Psoas muscle (tissue), 8 donors: ENCODE measurements at regions of chr16 and their contacts with region 1.

Region 1: GRCh38 chr16:69339289-69340108 is at the starts of genes COG8 and NIP7:
- DNase-seq: peak; percentile 95 to 97
- ATAC-seq: peak; percentile 97 to 98 (median 98)
- H3K4me3 ChIP-seq: peak within 1 kb of the TSS; percentile 91
- H3K27ac ChIP-seq: peak within 1 kb of the TSS; percentile 94
- H3K4me1 ChIP-seq: peaks cover 23% of the 10 kb centered on the region
- H3K27me3 ChIP-seq: no peaks in the 10 kb centered on the region
- CTCF ChIP-seq: peak; percentile 79
- total RNA-seq, gene COG8: 28.3 to 36.5 (median 35.4) TPM
- total RNA-seq, gene NIP7: 12.8 to 24.8 (median 16.6) TPM

Region 2: GRCh38 chr16:69186642-69187445 is 152.7 kb before region 1 on chr16 and contains the start of gene SNTB2:
- intact Hi-C with region 1: no loop called
- DNase-seq: peak; percentile 93 to 96
- ATAC-seq: peak; percentile 96 to 97 (median 96)
- H3K4me3 ChIP-seq: peak within 1 kb of the TSS; percentile 82
- H3K27ac ChIP-seq: peak within 1 kb of the TSS; percentile 80
- H3K4me1 ChIP-seq: peaks cover 26% of the 10 kb centered on the region
- H3K27me3 ChIP-seq: no peaks in the 10 kb centered on the region
- CTCF ChIP-seq: no peak
- total RNA-seq, gene SNTB2: 12.6 to 19.4 (median 14.7) TPM

Region 3: GRCh38 chr16:69276148-69277115 is 63.1 kb before region 1 on chr16:
- intact Hi-C with region 1: no loop called
- DNase-seq: peak; percentile 61 to 80
- ATAC-seq: peak; percentile 48 to 81 (median 75)
- H3K4me3 ChIP-seq: no peak overlapping the region
- H3K27ac ChIP-seq: peak overlapping the region; percentile 18
- H3K4me1 ChIP-seq: peaks cover 23% of the 10 kb centered on the region
- H3K27me3 ChIP-seq: no peaks in the 10 kb centered on the region
- CTCF ChIP-seq: no peak

Region 4: GRCh38 chr16:69310653-69311532 is 28.6 kb before region 1 on chr16 and contains the start of gene VPS4A:
- intact Hi-C with region 1: loop called in 1 of 2 experiments (anchors 1 kb)
- DNase-seq: peak; percentile 95 to 98
- ATAC-seq: peak; percentile 91 to 98 (median 94)
- H3K4me3 ChIP-seq: peak within 1 kb of the TSS; percentile 85
- H3K27ac ChIP-seq: peak within 1 kb of the TSS; percentile 92
- H3K4me1 ChIP-seq: peaks cover 20% of the 10 kb centered on the region
- H3K27me3 ChIP-seq: no peaks in the 10 kb centered on the region
- CTCF ChIP-seq: peak; percentile 92
- total RNA-seq, gene VPS4A: 46.2 to 60.6 (median 55.5) TPM

Region 5: DNA sequence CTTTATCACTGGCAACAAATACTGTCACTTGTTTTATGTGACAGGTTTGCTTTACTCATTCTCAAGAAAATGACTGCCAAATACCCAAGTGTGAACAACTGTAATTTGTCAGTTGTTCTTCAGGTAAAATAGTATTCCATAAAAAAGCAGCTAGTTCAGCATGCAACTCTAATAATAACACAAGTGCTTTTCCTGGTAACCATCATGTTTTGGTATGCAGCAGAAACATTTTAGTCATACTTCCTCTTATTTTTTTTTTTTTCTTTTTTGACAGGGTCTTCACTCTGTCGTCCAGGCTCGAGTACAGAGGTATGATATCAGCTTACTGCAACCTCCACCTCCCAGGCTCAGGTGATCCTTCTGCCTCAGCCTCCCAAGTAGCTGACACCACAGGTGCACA is 41.7 kb after region 1 on chr16:
- intact Hi-C with region 1: loop called (anchors 2 to 5 kb)
- DNase-seq: no peak
- ATAC-seq: no peak
- H3K4me3 ChIP-seq: no peak overlapping the region
- H3K27ac ChIP-seq: no peak overlapping the region
- H3K4me1 ChIP-seq: peaks cover 10% of the 10 kb centered on the region
- H3K27me3 ChIP-seq: no peaks in the 10 kb centered on the region
- CTCF ChIP-seq: no peak

Region 6: DNA sequence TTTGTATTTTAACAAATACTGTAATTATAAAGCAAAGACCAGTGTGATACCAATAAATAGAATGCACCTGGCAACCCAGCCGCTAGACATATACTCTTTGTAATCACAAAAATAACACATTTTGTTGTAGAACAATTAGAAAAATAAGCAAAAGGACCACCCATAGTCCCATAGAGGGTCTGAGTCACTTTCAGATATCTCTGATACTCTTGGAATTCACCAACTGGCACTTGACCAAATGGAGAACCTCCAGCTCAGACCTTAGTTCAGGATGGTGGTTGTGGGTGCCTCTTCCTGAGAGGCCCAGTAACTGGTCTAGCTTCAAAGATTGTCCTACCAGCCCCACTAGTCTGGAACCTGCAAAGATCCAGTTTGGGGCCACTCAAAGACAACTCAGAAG is 47.1 kb after region 1 on chr16:
- intact Hi-C with region 1: loop called (anchors 2 to 5 kb)
- DNase-seq: no peak
- ATAC-seq: no peak
- H3K4me3 ChIP-seq: peak overlapping the region; percentile 74
- H3K27ac ChIP-seq: peak overlapping the region; percentile 88
- H3K4me1 ChIP-seq: peaks cover 11% of the 10 kb centered on the region
- H3K27me3 ChIP-seq: no peaks in the 10 kb centered on the region
- CTCF ChIP-seq: no peak

Region 7: DNA sequence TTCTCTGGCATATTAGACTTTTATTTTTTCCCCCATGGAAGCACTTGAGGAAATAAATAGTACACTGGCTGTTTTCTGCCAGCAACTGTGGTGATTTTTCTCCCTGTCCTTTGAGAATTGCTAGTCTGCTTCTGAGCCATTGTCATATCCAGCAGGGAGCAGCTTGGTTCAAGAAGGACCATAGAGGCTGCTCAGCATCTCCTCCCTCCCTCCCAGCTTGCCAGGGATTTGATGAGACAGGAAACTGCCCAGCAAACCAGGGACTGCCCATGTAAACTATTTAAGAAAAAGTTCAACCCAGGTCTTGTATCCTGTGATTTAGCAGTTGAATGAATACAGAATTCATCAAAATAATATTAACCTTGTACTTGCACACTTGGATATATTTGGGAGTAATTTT is 124.4 kb after region 1 on chr16:
- intact Hi-C with region 1: no loop called
- DNase-seq: no peak
- ATAC-seq: no peak
- H3K4me3 ChIP-seq: no peak overlapping the region
- H3K27ac ChIP-seq: no peak overlapping the region
- H3K4me1 ChIP-seq: peaks cover 6% of the 10 kb centered on the region
- H3K27me3 ChIP-seq: no peaks in the 10 kb centered on the region
- CTCF ChIP-seq: no peak